CD4-positive, alpha-beta T cell (primary cell): ENCODE measurements at regions of chr7 and their contacts with region 1.

Region 1: DNA sequence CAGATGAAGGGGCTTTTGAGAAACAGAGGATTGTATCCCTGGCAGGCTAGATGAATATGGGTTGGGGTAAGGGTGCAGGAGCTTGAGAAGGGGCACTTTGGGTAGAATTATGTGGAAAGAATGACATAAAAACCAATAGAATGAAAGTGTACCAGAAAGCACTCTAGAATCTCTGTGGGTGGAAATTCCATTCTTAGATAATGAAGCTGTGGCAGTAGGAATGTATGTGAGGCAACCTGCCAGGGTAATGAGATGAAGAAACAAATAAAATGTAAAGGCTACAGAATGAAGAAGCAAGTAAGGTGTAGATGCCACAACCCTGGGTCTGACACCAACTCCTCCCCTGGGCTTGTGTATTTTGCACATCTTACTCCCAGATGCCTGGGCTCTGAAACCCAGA is 16.8 kb downstream of the NOBOX start:
- DNase-seq: no peak
- ATAC-seq: no peak
- H3K4me3 ChIP-seq: no peak overlapping the region
- H3K4me3 Mint-ChIP-seq: no peak overlapping the region
- H3K27ac ChIP-seq: no peak overlapping the region
- H3K27ac Mint-ChIP-seq: no peak overlapping the region
- H3K4me1 ChIP-seq: peaks cover 2% of the 10 kb centered on the region
- H3K4me1 Mint-ChIP-seq: peaks cover 2% of the 10 kb centered on the region
- H3K27me3 ChIP-seq: no peaks in the 10 kb centered on the region
- H3K27me3 Mint-ChIP-seq: no peaks in the 10 kb centered on the region
- CTCF ChIP-seq: no peak

Region 2: GRCh38 chr7:144399946-144400345 is 13.2 kb after region 1 on chr7:
- CTCF ChIA-PET with region 1: interaction called, 5 read pairs
- POLR2A ChIA-PET with region 1: no interaction called
- intact Hi-C with region 1: loop called in 1 of 2 experiments (anchors 1 kb)
- DNase-seq: no peak
- ATAC-seq: no peak
- H3K4me3 ChIP-seq: no peak overlapping the region
- H3K4me3 Mint-ChIP-seq: no peak overlapping the region
- H3K27ac ChIP-seq: no peak overlapping the region
- H3K27ac Mint-ChIP-seq: no peak overlapping the region
- H3K4me1 ChIP-seq: no peaks in the 10 kb centered on the region
- H3K4me1 Mint-ChIP-seq: no peaks in the 10 kb centered on the region
- H3K27me3 ChIP-seq: no peaks in the 10 kb centered on the region
- H3K27me3 Mint-ChIP-seq: no peaks in the 10 kb centered on the region
- CTCF ChIP-seq: no peak